ENCODE measurements at regions of chr4 and their contacts with region 1.

Region 1: GRCh38 chr4:87679449-87680169 is 29.5 kb downstream of the DMP1 start:
- DNase-seq: no peak
- H3K4me3 ChIP-seq: no peak overlapping the region
- H3K27ac ChIP-seq: no peak overlapping the region
- H3K4me1 ChIP-seq: no peaks in the 10 kb centered on the region
- H3K27me3 ChIP-seq: no peaks in the 10 kb centered on the region
- CTCF ChIP-seq: peak; percentile 57 to 66 (median 64)
- POLR2A ChIP-seq: no peak

Region 2: GRCh38 chr4:87559109-87559837 is 120.3 kb before region 1 on chr4:
- intact Hi-C with region 1: loop called (anchors 10 kb)
- DNase-seq: no peak
- H3K4me3 ChIP-seq: no peak overlapping the region
- H3K27ac ChIP-seq: no peak overlapping the region
- H3K4me1 ChIP-seq: no peaks in the 10 kb centered on the region
- H3K27me3 ChIP-seq: no peaks in the 10 kb centered on the region
- CTCF ChIP-seq: no peak
- POLR2A ChIP-seq: no peak

Region 3: GRCh38 chr4:87838890-87839591 is 159.4 kb after region 1 on chr4:
- intact Hi-C with region 1: loop called (anchors 5 kb)
- DNase-seq: no peak
- H3K4me3 ChIP-seq: no peak overlapping the region
- H3K27ac ChIP-seq: no peak overlapping the region
- H3K4me1 ChIP-seq: no peaks in the 10 kb centered on the region
- H3K27me3 ChIP-seq: no peaks in the 10 kb centered on the region
- CTCF ChIP-seq: peak; percentile 51 to 66 (median 58)
- POLR2A ChIP-seq: no peak